Ovary (tissue), 10 donors: ENCODE measurements at regions of chr19 and their contacts with region 1.

Region 1: GRCh38 chr19:7943444-7944176 is at the start of gene TIMM44:
- DNase-seq: peak; percentile 98 to 99 (median 98)
- H3K4me3 ChIP-seq: peak within 1 kb of the TSS; percentile 61
- H3K27ac ChIP-seq: peak within 1 kb of the TSS; percentile 97 to 98
- H3K4me1 ChIP-seq: peaks cover 10% of the 10 kb centered on the region
- H3K27me3 ChIP-seq: no peaks in the 10 kb centered on the region
- CTCF ChIP-seq: peak in 1 of 3 donors; percentile 21
- EP300 ChIP-seq: peak; percentile 75
- POLR2A ChIP-seq: peak; percentile 63
- total RNA-seq, gene TIMM44: 43.4 to 110 (median 51.8) TPM

Region 2: DNA sequence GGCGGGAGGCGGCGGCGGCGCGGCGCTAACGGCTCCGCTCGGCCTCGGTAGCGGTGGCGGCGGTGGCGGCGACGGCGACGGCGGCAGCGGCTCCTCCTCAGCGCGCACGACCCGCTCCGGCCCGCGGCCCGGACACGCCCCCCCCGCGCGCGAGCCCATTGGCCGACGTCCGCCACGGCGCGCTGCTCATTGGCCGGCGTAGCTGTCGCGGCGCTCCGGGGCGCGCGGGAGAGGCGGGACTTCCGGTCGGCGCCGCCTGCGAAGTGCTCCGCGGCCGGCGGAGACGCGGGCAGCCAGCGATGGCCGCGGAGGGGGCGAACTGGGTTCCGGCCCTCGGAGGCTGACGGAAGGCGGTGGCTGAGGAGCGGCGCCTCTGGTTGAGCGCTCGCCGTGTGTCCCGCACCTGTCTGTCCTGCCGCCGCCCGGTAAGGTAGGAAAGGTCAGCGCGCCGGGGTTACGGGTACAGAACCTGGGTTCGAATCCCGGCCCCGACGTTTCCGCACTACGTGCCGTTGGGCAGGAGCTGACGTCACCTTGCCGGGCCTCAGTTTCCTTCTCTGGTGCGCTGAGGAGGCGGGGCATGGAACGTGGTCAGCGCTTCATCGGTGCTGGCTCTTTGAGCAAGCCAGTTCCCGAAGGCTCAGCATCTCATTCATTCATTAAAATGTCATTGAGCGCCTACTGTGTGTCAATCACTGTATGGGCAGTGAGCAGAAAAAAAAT is 62.1 kb after region 1 on chr19 and contains the start of gene ELAVL1:
- intact Hi-C with region 1: loop called in 1 of 4 experiments (anchors 10 kb)
- DNase-seq: peak; percentile 84 to 93 (median 90)
- H3K4me3 ChIP-seq: peak within 1 kb of the TSS; percentile 89
- H3K27ac ChIP-seq: peak within 1 kb of the TSS; percentile 60 to 62
- H3K4me1 ChIP-seq: peaks cover 19% of the 10 kb centered on the region
- H3K27me3 ChIP-seq: no peaks in the 10 kb centered on the region
- CTCF ChIP-seq: no peak
- EP300 ChIP-seq: no peak
- POLR2A ChIP-seq: peak; percentile 43
- total RNA-seq, gene ELAVL1: 13.8 to 78.4 (median 65.6) TPM

Region 3: DNA sequence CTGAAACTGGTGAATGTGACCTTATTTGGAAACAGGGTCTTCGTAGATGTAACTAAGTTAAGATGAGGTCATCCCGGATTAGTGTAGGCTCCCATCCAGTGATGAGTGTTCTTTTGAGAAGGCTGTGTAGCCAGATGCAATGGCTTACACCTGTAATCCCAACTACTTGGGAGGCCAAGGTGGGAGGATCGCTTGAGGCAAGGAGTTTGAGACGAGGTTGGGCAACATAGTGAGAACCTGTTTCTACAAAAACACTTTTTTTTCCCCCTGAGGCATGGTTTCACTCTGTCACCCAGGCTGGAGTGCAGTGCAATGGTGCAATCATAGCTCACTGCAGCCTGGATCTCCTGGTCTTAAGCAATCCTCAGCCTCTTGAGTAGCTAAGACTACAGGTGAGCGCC is 169.4 kb after region 1 on chr19:
- intact Hi-C with region 1: no loop called
- DNase-seq: no peak
- H3K4me3 ChIP-seq: no peak overlapping the region
- H3K27ac ChIP-seq: no peak overlapping the region
- H3K4me1 ChIP-seq: no peaks in the 10 kb centered on the region
- H3K27me3 ChIP-seq: no peaks in the 10 kb centered on the region
- CTCF ChIP-seq: no peak
- EP300 ChIP-seq: no peak
- POLR2A ChIP-seq: no peak